ENCODE measurements at regions of chr11 and their contacts with region 1.

Region 1: DNA sequence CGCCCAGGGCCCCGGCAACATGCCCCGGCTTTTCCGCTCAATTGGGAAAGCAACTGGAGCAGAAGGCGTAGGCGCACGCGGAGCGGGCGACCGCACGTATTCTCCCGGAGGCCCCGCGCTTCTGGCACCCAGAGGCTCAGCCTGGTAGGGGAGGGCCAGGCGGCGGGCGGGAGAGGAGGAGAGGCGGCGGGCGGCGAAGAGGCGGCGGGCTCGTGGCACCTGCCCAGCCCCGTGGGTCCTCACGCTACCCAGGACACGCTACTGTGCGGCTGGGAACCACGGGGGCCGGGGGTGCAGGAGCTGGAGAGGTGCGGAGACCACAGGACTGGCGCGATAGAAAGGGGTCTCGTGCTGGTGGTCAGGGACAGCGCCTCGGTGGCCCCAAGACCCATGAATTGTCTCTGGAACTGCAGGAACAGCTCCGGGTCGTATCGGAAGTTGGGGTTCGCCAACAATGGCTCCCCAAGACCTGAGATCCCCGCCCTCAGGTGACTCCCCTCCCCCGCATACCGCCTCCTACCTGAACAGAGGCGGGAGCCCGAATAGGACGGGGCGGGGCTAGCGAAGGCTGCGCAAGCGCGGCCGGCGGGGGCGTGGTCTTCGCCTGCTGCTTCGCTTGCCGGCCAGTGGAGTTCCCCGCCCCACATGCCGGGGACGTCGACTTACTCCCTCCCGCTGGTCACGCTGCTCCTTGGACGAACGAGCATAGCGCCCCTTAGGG is at the start of gene SLC37A4:
- DNase-seq: peak; percentile 96 to 99 (median 98)
- ATAC-seq: peak; percentile 87 to 89
- H3K4me3 Mint-ChIP-seq: peak within 1 kb of the TSS; percentile 76 to 94 (median 90)
- H3K27ac Mint-ChIP-seq: peak within 1 kb of the TSS; percentile 37 to 96 (median 88)
- H3K4me1 Mint-ChIP-seq: peaks cover 16 to 22% (median 20%) of the 10 kb centered on the region in 4 donors
- H3K27me3 Mint-ChIP-seq: no peaks in the 10 kb centered on the region
- polyA plus RNA-seq, gene SLC37A4: 9.7 to 12.8 (median 12.1) TPM

Region 2: GRCh38 chr11:118973962-118974361 is 56.5 kb before region 1 on chr11:
- POLR2A ChIA-PET with region 1: no interaction called
- DNase-seq: no peak
- ATAC-seq: no peak
- H3K4me3 Mint-ChIP-seq: no peak overlapping the region
- H3K27ac Mint-ChIP-seq: peak overlapping the region in 1 of 10 donors; percentile 17
- H3K4me1 Mint-ChIP-seq: no peaks in the 10 kb centered on the region
- H3K27me3 Mint-ChIP-seq: peaks cover 6 to 29% (median 27%) of the 10 kb centered on the region in 5 donors

Region 3: DNA sequence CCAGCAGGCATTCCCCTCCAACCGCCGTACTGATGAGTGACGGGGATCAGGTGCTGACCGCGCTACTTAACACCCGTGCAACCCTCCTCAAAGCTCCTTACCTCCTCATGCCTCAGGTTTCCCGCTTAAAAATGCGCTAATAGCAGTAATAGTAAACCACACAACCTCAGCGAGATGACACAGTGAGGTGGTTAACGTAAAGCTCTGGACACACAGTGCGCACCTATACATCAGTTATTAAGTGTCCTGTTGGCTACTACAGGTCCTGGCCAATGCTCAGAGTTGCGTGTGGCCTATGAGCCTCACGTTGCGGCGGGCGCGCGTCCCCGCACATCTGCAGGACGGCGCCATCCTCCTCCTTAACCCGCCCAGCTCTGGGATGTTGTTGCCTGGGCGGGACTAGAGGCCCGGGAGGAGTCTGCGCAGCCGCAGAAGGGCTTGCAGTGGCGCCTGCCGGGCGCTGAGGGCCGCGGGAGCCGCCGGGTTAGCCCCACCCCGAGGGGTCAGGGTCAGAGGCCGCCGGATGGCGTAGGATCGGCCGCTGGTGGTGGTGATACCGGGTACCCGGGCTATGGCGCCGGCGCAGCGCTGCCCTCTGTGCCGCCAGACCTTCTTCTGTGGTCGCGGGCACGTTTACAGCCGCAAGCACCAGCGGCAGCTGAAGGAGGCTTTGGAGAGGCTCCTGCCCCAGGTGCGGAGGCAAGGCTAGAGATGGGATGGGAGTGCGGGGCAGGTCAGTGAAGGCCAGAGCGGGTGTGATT is 32.7 kb before region 1 on chr11 and contains the start of gene CENATAC:
- POLR2A ChIA-PET with region 1: interaction called, 21 read pairs
- DNase-seq: peak; percentile 90 to 96 (median 94)
- ATAC-seq: peak; percentile 93
- H3K4me3 Mint-ChIP-seq: peak within 1 kb of the TSS; percentile 88 to 99 (median 98)
- H3K27ac Mint-ChIP-seq: peak within 1 kb of the TSS; percentile 89 to 99 (median 97)
- H3K4me1 Mint-ChIP-seq: peaks cover 13 to 48% (median 45%) of the 10 kb centered on the region in 4 donors
- H3K27me3 Mint-ChIP-seq: no peaks in the 10 kb centered on the region
- polyA plus RNA-seq, gene CENATAC: 6.1 to 9.1 (median 8.7) TPM

Region 4: GRCh38 chr11:119041821-119042514 is 11.5 kb after region 1 on chr11:
- POLR2A ChIA-PET with region 1: no interaction called
- DNase-seq: no peak
- ATAC-seq: no peak
- H3K4me3 Mint-ChIP-seq: peak overlapping the region in 1 of 10 donors; percentile 30
- H3K27ac Mint-ChIP-seq: peak overlapping the region in 1 of 10 donors; percentile 20
- H3K4me1 Mint-ChIP-seq: peaks cover 0 to 4% (median 0%) of the 10 kb centered on the region in 4 donors
- H3K27me3 Mint-ChIP-seq: no peaks in the 10 kb centered on the region

Region 5: GRCh38 chr11:119077839-119078238 is 47.4 kb after region 1 on chr11:
- POLR2A ChIA-PET with region 1: no interaction called
- DNase-seq: no peak
- ATAC-seq: no peak
- H3K4me3 Mint-ChIP-seq: no peak overlapping the region
- H3K27ac Mint-ChIP-seq: peak overlapping the region in 1 of 10 donors; percentile 79
- H3K4me1 Mint-ChIP-seq: peaks cover 1 to 4% (median 3%) of the 10 kb centered on the region in 4 donors
- H3K27me3 Mint-ChIP-seq: no peaks in the 10 kb centered on the region